ENCODE measurements at regions of chr18 and their contacts with region 1.

Region 1: DNA sequence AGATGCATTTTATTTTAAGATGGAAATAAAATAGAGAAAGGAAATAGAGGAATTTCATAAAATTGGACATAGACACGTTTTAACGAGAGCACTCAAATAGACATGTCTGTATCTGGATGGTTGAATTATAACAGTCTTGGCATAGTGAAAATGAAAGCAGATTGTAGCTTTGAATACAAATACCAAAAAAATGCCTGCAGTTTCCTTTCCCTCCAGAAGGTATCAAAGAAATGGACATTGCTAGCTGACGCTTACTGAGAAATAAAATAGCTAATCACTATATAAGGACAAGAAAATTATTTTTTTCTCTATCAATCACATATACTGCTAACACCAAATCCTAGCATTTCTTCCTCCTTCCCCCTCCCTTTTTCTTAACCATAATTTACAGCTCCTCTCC is 11.4 kb upstream of the MAPRE2 start:
- DNase-seq: no peak

Region 2: GRCh38 chr18:35117951-35118411 is 88.2 kb after region 1 on chr18:
- intact Hi-C with region 1: no loop called
- DNase-seq: no peak

Region 3: DNA sequence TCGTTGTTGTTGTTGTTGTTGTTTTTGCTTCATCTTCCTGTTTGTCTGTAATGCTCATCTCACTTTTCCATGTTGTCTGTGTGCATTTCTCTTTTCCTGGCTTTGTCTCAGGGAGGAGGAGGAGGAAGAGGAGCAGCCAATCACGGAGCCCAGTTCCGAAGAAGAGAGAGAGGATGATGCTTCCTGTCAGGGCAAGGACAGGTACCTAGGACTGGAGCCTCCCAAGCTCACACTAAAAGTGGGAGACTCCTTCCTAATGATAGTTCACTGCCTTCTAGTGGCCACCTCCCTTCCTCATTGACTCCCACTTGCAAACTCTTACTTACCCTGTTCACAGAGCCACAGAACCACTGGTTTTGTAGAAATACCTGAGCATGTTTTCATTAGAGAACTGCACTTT is 1619.4 kb after region 1 on chr18:
- intact Hi-C with region 1: loop called in 1 of 2 experiments (anchors 5 kb)
- DNase-seq: no peak

Measured in posterior vena cava (tissue), 2 donors.